Vagina (tissue), 2 donors: ENCODE measurements at regions of chr3 and their contacts with region 1.

Region 1: DNA sequence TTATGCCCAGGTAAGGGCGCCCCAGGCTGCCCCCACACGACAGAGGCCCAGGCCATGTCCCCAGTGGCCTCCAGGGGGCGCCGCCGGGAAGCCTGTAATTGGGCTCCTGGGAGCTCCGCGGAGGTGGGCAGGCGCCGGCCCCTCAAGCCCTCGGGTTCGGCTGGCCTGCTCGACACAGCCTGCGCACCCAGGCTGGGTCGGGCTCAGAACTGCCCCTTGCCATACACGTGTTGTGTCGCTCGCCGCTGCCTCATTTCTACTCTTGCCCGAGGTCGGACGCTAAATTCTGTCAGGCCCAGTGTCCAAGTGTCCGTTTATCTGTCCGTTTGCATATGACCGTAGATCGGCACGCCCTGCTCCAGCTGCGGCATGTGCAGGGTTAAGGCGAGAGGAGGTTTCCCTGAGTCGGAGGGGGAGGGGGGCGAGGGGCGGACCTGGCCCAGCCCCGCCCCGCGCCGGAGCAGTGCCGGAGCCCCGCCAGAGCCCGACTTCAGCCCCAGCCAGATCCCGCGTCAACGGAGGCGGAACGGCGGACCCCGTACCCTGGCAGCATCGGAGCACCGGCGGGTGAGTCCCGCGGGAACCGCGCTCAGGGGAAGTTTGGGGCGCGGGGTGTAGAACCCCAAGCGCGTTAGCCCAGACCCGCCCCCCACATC is at the start of gene KLHDC8B:
- DNase-seq: no peak
- H3K4me3 ChIP-seq: peak within 1 kb of the TSS; percentile 64 to 96
- H3K27ac ChIP-seq: peak within 1 kb of the TSS; percentile 90
- H3K4me1 ChIP-seq: peaks cover 49% of the 10 kb centered on the region
- H3K27me3 ChIP-seq: no peaks in the 10 kb centered on the region
- CTCF ChIP-seq: peak; percentile 93 to 95 (median 94)
- POLR2A ChIP-seq: peak in 1 of 2 donors; percentile 48
- total RNA-seq, gene KLHDC8B: 43.7 TPM

Region 2: DNA sequence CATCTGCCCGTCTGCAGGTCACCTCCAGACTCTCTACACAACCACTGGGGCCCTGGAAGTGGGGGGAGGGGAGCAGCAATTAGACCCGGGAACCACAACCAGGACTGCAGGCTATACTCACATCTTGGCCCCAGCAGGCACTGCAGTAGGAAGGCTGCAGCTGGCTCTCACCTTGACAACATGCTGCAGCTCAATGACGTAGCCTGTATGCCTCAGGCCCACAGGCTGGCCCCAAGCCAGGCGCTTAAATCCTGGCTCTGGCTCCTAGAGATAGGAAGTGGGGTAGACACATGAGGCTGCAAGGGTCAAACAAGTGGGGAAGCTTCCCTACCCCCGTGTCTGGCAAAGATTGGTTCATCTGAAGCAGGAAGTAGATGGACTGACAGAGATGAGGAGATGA is 72.8 kb before region 1 on chr3:
- intact Hi-C with region 1: no loop called
- DNase-seq: no peak
- H3K4me3 ChIP-seq: no peak overlapping the region
- H3K27ac ChIP-seq: no peak overlapping the region
- H3K4me1 ChIP-seq: peaks cover 12% of the 10 kb centered on the region
- H3K27me3 ChIP-seq: no peaks in the 10 kb centered on the region
- CTCF ChIP-seq: no peak
- POLR2A ChIP-seq: no peak

Region 3: DNA sequence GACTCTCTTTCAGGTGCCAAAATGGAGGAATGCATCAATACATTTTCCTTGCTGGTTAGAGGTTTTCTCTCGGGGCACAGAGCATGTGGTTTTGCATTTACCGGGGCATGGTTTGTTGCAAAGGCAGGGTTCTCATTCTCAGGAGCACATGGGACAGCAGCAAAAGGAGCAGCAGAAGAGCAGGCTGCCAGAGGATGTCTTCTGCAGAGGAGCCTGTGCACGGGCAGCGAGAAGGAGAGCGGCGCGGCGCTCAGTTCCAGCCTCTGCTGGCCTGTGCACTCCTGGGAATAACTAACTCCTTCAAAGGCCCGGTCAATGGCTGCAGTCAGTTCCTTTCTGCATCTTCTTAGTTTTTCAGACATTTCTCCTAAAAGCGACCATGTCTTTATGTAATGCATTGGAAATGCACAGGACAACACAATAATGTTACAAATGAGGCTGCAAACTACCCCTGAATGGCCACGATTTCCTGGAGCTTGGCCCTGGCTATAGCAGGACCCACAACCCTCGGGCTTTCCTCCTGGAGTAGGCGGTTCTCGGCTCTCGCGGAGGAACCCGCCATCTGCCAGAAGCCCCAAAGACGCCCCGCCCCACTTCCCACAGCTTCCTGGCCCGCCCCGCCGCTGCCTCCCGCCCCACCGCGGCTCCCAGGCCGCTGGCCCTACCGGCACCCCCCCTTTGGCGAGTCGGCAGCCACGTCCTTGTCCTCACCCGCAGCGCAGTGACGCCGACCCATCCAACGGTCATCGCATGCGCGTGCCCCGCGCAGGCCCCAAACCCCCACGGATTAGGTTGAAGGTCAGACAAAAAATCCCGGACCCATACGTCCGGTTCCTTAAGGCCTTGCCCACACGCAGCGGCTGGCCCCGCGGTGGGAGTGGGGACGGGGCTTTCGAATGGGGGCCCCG is 105.5 kb after region 1 on chr3 and contains the start of gene C3orf62:
- intact Hi-C with region 1: loop called (anchors 10 kb)
- DNase-seq: peak in 1 of 2 donors; percentile 89
- H3K4me3 ChIP-seq: peak within 1 kb of the TSS; percentile 33 to 54
- H3K27ac ChIP-seq: peak within 1 kb of the TSS; percentile 94
- H3K4me1 ChIP-seq: peaks cover 38% of the 10 kb centered on the region
- H3K27me3 ChIP-seq: no peaks in the 10 kb centered on the region
- CTCF ChIP-seq: peak in 1 of 3 experiments; percentile 13
- POLR2A ChIP-seq: peak in 1 of 2 donors; percentile 22
- total RNA-seq, gene C3orf62: 17.9 TPM

Region 4: GRCh38 chr3:49339945-49340800 is 168.9 kb after region 1 on chr3 and contains the start of gene USP4:
- intact Hi-C with region 1: loop called (anchors 5 kb)
- DNase-seq: peak in 1 of 2 donors; percentile 91
- H3K4me3 ChIP-seq: peak within 1 kb of the TSS; percentile 61 to 91
- H3K27ac ChIP-seq: peak within 1 kb of the TSS; percentile 97
- H3K4me1 ChIP-seq: peaks cover 30% of the 10 kb centered on the region
- H3K27me3 ChIP-seq: no peaks in the 10 kb centered on the region
- CTCF ChIP-seq: peak in 2 of 3 experiments; percentile 20 to 67
- POLR2A ChIP-seq: peak in 1 of 2 donors; percentile 51
- total RNA-seq, gene USP4: 45.2 TPM

Region 5: DNA sequence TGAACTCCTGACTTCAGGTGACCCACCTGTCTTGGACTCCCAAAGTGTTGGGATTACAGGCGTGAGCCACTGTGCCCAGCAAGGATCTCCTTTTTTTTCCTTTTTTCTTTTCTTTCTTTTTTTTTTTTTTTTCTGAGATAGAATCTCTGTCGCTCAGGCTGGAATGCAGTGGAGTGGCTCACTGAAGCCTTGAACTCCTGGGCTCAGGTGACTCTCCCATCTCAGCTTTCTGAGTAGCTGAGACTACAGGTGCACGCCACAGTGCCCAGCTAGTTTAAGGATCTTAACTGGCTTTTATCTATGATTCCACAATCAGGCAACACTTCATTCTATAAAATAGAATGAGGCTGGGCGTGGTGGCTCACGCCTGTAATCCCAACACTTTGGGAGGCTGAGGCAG is 274.1 kb after region 1 on chr3:
- intact Hi-C with region 1: loop called (anchors 5 kb)
- DNase-seq: no peak
- H3K4me3 ChIP-seq: no peak overlapping the region
- H3K27ac ChIP-seq: no peak overlapping the region
- H3K4me1 ChIP-seq: peaks cover 10% of the 10 kb centered on the region
- H3K27me3 ChIP-seq: no peaks in the 10 kb centered on the region
- CTCF ChIP-seq: no peak
- POLR2A ChIP-seq: no peak

Region 6: GRCh38 chr3:49984394-49984793 is 813.1 kb after region 1 on chr3:
- intact Hi-C with region 1: no loop called
- DNase-seq: no peak
- H3K4me3 ChIP-seq: no peak overlapping the region
- H3K27ac ChIP-seq: no peak overlapping the region
- H3K4me1 ChIP-seq: no peaks in the 10 kb centered on the region
- H3K27me3 ChIP-seq: no peaks in the 10 kb centered on the region
- CTCF ChIP-seq: no peak
- POLR2A ChIP-seq: no peak